Heart left ventricle (tissue), 16 donors: ENCODE measurements at regions of chr19 and their contacts with region 1.

Region 1: DNA sequence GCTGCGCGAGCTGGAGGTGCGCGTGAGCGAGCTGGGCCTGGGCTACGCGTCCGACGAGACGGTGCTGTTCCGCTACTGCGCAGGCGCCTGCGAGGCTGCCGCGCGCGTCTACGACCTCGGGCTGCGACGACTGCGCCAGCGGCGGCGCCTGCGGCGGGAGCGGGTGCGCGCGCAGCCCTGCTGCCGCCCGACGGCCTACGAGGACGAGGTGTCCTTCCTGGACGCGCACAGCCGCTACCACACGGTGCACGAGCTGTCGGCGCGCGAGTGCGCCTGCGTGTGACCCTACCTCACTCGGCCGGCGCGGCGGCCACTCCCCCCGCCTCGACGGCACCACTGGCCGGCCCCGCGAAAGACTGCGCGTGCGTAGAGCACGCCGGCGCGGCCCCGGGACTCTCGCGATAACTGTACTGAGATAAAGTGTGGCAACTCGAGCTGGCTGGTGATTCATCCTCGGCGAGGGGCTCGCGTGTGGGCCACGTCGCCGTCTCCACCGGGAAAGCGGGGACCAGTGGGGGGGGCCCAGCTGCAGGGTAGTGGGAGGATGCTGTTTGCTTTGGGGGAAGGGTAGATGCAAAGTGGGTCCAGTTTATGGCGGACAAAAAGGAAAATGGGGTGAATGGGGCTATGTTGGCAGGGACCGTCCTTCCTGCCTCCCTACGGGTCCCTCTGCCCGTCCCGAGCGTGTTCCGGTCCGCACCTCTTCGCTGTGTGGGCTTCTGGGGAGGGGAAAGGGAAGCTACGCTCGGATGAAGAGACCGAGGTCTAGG is 11.4 kb downstream of the FUT6 start:
- DNase-seq: peak; percentile 83 to 93 (median 89)
- ATAC-seq: peak; percentile 53 to 78 (median 76)
- H3K4me3 ChIP-seq: peak overlapping the region; percentile 7 to 64 (median 46)
- H3K27ac ChIP-seq: peak overlapping the region in 11 of 12 donors; percentile 43 to 88 (median 80)
- H3K4me1 ChIP-seq: peaks cover 0 to 30% (median 4%) of the 10 kb centered on the region in 12 donors
- H3K27me3 ChIP-seq: peaks cover 0 to 28% (median 13%) of the 10 kb centered on the region in 9 donors
- CTCF ChIP-seq: no peak
- POLR2A ChIP-seq: no peak

Region 2: DNA sequence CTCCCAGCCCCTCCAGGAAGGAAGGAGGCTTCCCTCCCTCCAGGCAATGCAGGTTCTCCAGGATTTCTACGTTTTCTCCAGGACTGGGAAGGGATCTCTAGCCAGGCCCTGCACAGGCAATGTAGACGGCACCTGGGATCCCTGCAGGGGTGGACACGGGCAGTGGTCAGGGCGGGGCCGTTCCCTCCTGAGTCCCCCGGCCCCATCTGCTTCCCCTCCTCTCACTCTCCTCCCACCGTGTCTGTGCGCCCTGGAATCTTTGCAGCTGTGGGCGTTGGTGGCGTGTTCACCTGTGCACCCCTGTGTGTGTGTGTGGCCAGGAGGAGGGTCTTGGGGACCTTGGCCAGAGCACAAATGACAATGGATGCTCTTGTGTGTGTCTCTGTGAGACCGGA is 13.2 kb before region 1 on chr19:
- intact Hi-C with region 1: no loop called
- DNase-seq: no peak
- ATAC-seq: peak in 1 of 4 donors; percentile 46
- H3K4me3 ChIP-seq: no peak overlapping the region
- H3K27ac ChIP-seq: no peak overlapping the region
- H3K4me1 ChIP-seq: no peaks in the 10 kb centered on the region
- H3K27me3 ChIP-seq: no peaks in the 10 kb centered on the region
- CTCF ChIP-seq: no peak
- POLR2A ChIP-seq: no peak

Region 3: GRCh38 chr19:5877869-5878268 is 49.8 kb after region 1 on chr19:
- intact Hi-C with region 1: loop called in 2 of 10 experiments (anchors 5 kb)
- DNase-seq: no peak
- ATAC-seq: no peak
- H3K4me3 ChIP-seq: no peak overlapping the region
- H3K27ac ChIP-seq: peak overlapping the region in 1 of 12 donors; percentile 13
- H3K4me1 ChIP-seq: peaks cover 0 to 14% (median 9%) of the 10 kb centered on the region in 12 donors
- H3K27me3 ChIP-seq: peaks cover 0 to 12% (median 0%) of the 10 kb centered on the region in 9 donors
- CTCF ChIP-seq: no peak
- POLR2A ChIP-seq: no peak

Region 4: DNA sequence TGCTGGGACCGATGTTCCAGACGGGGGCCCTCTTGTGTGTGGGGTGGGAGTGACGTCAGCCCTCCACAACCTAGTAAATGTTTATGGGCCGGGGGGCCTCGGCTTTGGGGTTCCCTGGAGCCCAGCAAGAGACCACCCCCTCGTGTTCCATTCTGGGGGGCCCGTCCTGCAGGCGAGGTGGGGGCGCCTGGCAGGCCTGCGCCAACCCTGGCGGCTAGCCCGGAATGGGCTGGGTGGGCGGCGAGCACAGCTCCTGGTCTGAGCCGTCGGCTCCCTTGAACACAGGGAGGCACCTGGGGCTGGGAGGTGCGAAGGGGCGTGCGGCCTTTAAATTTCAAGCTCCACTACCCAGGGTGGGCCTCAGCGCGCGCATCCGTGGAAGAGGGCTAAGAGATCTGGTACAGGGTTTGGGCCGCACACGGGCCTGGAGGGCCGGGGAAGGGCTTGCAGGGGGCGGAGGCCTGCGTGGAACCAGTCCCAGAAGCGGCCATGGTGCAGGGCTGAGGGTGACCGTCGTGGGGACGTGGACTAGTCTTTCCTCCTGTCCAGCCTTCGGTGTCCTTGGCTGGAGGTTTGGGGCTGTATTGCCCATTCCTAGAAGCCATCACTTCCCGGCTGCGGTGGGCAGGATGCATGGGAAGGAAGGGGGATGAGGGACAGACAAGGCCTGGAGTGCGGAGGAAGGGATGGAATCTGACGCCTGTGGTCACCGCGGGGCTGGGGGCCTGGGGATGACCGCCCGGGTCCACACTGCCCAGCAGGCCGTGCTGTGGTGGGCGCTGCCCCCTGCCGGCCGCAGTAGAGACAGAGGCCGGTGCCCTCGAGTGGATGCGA is 64.1 kb after region 1 on chr19:
- intact Hi-C with region 1: loop called in 7 of 10 experiments (anchors 5 kb)
- DNase-seq: peak in 1 of 5 donors; percentile 55
- ATAC-seq: peak; percentile 17 to 38 (median 29)
- H3K4me3 ChIP-seq: no peak overlapping the region
- H3K27ac ChIP-seq: peak overlapping the region in 1 of 12 donors; percentile 89
- H3K4me1 ChIP-seq: peaks cover 0 to 56% (median 27%) of the 10 kb centered on the region in 12 donors
- H3K27me3 ChIP-seq: peaks cover 0 to 15% (median 0%) of the 10 kb centered on the region in 9 donors
- CTCF ChIP-seq: peak; percentile 44 to 73 (median 61)
- POLR2A ChIP-seq: no peak